GM12878 (cell line): ENCODE measurements at regions of chr7 and their contacts with region 1.

Region 1: DNA sequence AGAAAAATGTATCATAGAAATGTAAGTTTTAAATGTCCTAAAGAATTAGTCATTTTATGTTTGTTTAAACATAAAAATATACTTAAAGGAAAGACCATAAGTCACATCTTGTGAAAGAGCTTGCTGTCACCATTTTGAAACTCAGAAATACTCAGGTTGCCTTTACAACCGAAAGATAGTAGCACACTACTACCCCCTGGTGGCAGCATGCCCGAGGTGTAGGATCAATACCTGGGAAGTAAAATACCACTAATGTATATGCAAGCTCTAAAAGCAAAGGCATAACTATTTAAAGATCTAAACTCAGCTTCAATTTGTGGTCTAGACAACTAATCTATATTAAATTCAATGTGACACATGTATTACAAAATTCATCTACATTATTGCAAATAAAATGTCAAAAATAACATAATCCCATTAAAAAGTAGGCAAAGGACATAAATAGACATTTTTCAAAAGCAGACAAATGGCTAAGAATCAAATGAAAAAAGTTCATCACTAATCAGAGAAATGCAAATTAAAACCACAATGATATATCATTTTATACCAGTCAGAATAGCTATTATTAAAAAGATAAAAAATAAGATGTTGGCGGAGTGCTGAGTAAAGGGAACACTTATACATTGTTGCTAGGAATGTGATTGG is 47.7 kb upstream of the FGL2 start:
- DNase-seq: peak; percentile 76
- ATAC-seq: peak; percentile 99
- H3K4me3 ChIP-seq: no peak overlapping the region
- H3K27ac ChIP-seq: no peak overlapping the region
- H3K4me1 ChIP-seq: no peaks in the 10 kb centered on the region
- H3K27me3 ChIP-seq: no peaks in the 10 kb centered on the region
- CTCF ChIP-seq: peak; percentile 77 to 86 (median 81)
- EP300 ChIP-seq: no peak
- POLR2A ChIP-seq: no peak
- RAD21 ChIP-seq: peak; percentile 99

Region 2: DNA sequence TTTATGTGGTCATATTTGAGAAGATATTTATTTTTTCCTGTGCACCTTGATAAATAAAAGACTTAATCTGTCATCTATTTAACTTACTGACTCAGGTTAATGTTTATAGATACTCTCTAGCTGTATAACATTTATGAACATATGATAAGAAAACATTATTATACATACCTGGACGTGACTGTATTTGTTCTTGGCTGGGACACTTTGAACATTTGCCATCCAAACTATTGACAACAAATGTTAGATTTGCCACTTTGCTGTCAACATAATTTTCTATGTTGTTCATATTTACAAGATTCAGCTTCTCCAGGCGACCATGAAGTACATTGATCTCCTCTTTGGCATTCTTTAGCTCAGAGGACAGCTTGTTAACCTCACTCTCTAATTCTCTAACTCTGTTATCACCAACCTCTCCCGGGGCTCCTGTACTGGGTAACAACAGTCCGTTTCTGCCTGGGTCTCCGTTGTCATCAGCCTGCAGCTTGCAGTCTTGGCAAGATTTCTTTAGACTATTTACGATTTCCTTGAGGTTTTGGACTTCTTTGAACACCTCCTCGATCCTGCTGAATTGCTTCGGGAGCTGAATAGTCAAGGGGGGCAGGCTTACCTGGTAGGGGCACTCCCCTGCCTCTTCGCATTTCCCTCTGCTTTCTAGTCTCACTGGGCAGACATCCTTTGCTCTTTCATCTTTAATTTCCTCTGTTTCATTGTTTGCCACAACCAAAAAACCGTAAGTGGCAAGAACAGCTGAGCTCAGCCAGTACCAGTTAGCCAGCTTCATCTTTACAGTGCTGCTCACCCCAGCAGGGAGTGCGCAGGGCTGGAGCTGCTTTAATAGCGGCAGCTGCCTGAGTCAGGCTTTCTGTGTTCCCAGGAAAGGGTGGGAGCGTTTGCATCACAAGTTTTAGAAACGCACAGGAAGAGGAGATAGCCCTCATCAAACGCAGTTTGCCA is 48.0 kb before region 1 on chr7 and contains the start of gene FGL2:
- CTCF ChIA-PET with region 1: interaction called, 67 read pairs
- POLR2A ChIA-PET with region 1: interaction called, 5 read pairs
- RAD21 ChIA-PET with region 1: interaction called, 72 read pairs
- SMC1A ChIA-PET with region 1: interaction called, 124 read pairs
- in situ Hi-C with region 1: no loop called
- intact Hi-C with region 1: loop called (anchors 2 kb)
- DNase-seq: no peak
- ATAC-seq: peak; percentile 37
- H3K4me3 ChIP-seq: peak within 1 kb of the TSS; percentile 64
- H3K27ac ChIP-seq: peak within 1 kb of the TSS; percentile 81
- H3K4me1 ChIP-seq: peaks cover 32% of the 10 kb centered on the region
- H3K27me3 ChIP-seq: no peaks in the 10 kb centered on the region
- CTCF ChIP-seq: no peak
- EP300 ChIP-seq: no peak
- POLR2A ChIP-seq: no peak
- RAD21 ChIP-seq: no peak
- polyA plus RNA-seq, gene FGL2: 1.2 to 1.6 TPM

Region 3: DNA sequence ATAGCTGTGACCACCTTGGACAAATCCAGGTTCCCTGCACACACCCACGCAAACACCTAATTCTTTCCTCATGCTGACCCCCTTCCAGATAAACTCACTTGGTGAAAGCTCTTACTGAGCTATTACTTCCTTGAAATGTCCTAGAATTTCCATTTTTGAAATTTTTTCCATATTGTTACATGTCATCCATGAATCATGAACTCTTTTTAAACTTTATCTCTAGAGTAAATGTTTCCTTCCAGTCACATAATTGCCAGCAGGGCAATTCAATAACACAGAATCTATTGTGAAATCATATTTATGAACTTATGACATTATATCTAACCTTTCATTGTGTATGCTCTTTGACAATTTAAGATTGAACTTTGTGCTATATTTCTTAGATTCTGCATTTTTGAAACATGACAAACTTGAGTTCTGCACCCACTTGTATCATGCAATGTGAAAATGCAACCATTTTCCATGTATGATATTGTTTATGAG is 20.9 kb before region 1 on chr7:
- CTCF ChIA-PET with region 1: interaction called, 10 read pairs
- POLR2A ChIA-PET with region 1: interaction called, 3 read pairs
- RAD21 ChIA-PET with region 1: no interaction called
- SMC1A ChIA-PET with region 1: interaction called, 8 read pairs
- in situ Hi-C with region 1: no loop called
- intact Hi-C with region 1: no loop called
- DNase-seq: no peak
- ATAC-seq: no peak
- H3K4me3 ChIP-seq: no peak overlapping the region
- H3K27ac ChIP-seq: no peak overlapping the region
- H3K4me1 ChIP-seq: no peaks in the 10 kb centered on the region
- H3K27me3 ChIP-seq: no peaks in the 10 kb centered on the region
- CTCF ChIP-seq: no peak
- EP300 ChIP-seq: no peak
- POLR2A ChIP-seq: no peak
- RAD21 ChIP-seq: no peak

Region 4: GRCh38 chr7:77269360-77270093 is 22.2 kb after region 1 on chr7:
- CTCF ChIA-PET with region 1: interaction called, 10 read pairs
- POLR2A ChIA-PET with region 1: interaction called, 4 read pairs
- RAD21 ChIA-PET with region 1: interaction called, 7 read pairs
- SMC1A ChIA-PET with region 1: interaction called, 11 read pairs
- in situ Hi-C with region 1: no loop called
- intact Hi-C with region 1: no loop called
- DNase-seq: peak; percentile 23
- ATAC-seq: peak; percentile 79
- H3K4me3 ChIP-seq: no peak overlapping the region
- H3K27ac ChIP-seq: no peak overlapping the region
- H3K4me1 ChIP-seq: peaks cover 19% of the 10 kb centered on the region
- H3K27me3 ChIP-seq: no peaks in the 10 kb centered on the region
- CTCF ChIP-seq: no peak
- EP300 ChIP-seq: no peak
- POLR2A ChIP-seq: no peak
- RAD21 ChIP-seq: no peak

Region 5: GRCh38 chr7:77331938-77332695 is 84.8 kb after region 1 on chr7:
- CTCF ChIA-PET with region 1: interaction called, 88 read pairs
- POLR2A ChIA-PET with region 1: interaction called, 9 read pairs
- RAD21 ChIA-PET with region 1: interaction called, 87 read pairs
- SMC1A ChIA-PET with region 1: interaction called, 83 read pairs
- in situ Hi-C with region 1: loop called (anchors 5 kb)
- intact Hi-C with region 1: loop called (anchors 1 kb)
- DNase-seq: peak; percentile 95
- ATAC-seq: peak; percentile 84
- H3K4me3 ChIP-seq: no peak overlapping the region
- H3K27ac ChIP-seq: no peak overlapping the region
- H3K4me1 ChIP-seq: peaks cover 51% of the 10 kb centered on the region
- H3K27me3 ChIP-seq: no peaks in the 10 kb centered on the region
- CTCF ChIP-seq: peak; percentile 58 to 82 (median 69); a peak in 5 of 6 replicates
- EP300 ChIP-seq: no peak
- POLR2A ChIP-seq: no peak
- RAD21 ChIP-seq: peak; percentile 90

Region 6: GRCh38 chr7:77395626-77396025 is 148.3 kb after region 1 on chr7:
- CTCF ChIA-PET with region 1: no interaction called
- POLR2A ChIA-PET with region 1: no interaction called
- RAD21 ChIA-PET with region 1: no interaction called
- SMC1A ChIA-PET with region 1: no interaction called
- in situ Hi-C with region 1: no loop called
- intact Hi-C with region 1: no loop called
- DNase-seq: no peak
- ATAC-seq: no peak
- H3K4me3 ChIP-seq: no peak overlapping the region
- H3K27ac ChIP-seq: no peak overlapping the region
- H3K4me1 ChIP-seq: peaks cover 33% of the 10 kb centered on the region
- H3K27me3 ChIP-seq: no peaks in the 10 kb centered on the region
- CTCF ChIP-seq: no peak
- EP300 ChIP-seq: no peak
- POLR2A ChIP-seq: no peak
- RAD21 ChIP-seq: no peak